ENCODE measurements at regions of chr2 and their contacts with region 1.

Region 1: DNA sequence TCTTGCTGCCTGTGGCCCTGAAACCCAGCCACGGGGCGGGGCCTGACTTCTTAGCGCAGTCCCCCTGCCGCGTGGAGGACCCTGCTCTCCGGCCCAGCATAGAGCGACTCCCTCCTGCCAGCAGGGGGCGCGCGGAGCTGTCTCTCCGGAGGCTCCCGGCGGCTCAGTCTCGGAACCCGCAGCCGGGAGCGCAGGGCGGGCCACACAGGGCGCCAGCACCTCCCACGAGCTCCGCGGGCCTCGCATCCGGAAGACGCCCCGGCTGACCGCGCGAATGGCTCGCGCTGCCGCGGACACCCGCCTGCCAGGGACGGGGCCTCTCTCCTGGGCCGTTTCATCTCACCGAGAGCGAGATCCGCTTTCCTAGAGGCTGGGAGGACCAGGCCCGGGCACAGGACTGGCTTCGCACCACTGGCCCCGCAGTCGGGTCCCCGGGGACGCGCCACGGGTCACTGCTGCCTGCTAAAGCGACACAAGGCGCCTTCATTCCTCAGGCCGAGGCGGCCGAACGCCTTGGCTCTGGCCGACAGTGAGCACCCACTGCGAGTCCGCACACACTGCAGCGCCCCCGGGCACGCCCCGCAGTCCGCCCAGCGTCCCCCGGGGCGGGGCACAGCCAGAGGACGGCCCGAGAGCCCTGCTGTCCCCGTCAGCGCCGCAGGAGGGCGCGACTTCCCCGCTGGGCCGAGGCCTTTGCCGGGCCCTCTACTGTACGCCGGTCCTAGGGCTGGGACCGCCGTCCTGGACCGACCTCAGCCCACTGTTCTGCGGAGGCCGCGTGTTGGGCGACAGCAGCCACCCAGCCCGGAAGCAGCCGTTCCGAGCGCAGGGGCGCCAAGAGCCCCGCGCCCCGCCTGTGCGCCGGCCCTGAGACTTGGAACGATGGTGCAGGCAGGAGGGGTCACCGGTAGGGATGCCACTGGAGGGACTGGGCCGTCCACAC is 39.0 kb upstream of the ARHGEF4 start:
- DNase-seq: peak; percentile 85 to 92 (median 86)
- H3K4me3 ChIP-seq: peak overlapping the region; percentile 92
- H3K4me3 Mint-ChIP-seq: peak overlapping the region; percentile 51 to 92 (median 71)
- H3K27ac ChIP-seq: peak overlapping the region; percentile 84
- H3K27ac Mint-ChIP-seq: peak overlapping the region in 7 of 8 donors; percentile 29 to 78 (median 58)
- H3K4me1 ChIP-seq: peaks cover 4% of the 10 kb centered on the region
- H3K4me1 Mint-ChIP-seq: peaks cover 4 to 8% (median 6%) of the 10 kb centered on the region in 3 donors
- H3K27me3 ChIP-seq: no peaks in the 10 kb centered on the region
- H3K27me3 Mint-ChIP-seq: peaks cover 5% of the 10 kb centered on the region in 2 donors

Region 2: DNA sequence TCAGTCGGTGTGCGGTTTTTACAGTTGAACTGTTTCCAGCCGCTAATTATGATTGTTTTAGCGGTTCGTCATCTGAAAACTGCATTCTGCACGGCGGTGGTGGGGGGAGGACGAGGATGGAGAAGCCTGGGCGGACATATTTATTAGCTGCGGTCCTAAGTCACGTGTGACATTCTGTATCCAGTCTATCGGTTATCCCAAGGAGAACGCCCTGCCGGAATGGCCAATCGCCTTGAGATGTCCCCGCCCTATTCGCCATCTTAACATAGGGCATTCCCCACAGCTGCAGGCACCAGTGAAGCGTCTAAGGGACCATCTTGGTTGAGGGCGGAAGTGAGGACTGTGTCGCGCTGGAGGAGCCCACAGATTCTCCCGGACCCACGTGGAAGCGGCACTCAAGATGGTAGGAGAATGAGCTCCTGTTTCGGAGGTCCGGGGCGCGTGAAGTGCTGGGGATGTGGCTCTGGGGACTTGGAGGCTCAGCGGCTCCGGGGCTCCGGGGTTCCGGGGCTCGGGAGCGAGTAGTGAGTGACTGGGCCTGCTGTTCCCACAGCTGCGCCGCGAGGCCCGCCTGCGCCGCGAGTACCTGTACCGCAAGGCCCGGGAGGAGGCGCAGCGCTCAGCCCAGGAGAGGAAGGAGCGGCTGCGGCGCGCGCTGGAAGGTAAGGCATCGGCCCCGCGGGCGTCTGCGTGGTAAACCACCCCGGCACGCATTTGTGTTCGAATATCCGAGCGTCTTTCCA is 455.1 kb before region 1 on chr2 and contains the start of gene IMP4:
- CTCF ChIA-PET with region 1: interaction called, 4 read pairs
- POLR2A ChIA-PET with region 1: interaction called, 10 read pairs
- DNase-seq: peak; percentile 89 to 98 (median 96)
- H3K4me3 ChIP-seq: peak within 1 kb of the TSS; percentile 90
- H3K4me3 Mint-ChIP-seq: peak within 1 kb of the TSS; percentile 96 to 100 (median 99)
- H3K27ac ChIP-seq: peak within 1 kb of the TSS; percentile 95
- H3K27ac Mint-ChIP-seq: peak within 1 kb of the TSS; percentile 93 to 100 (median 98)
- H3K4me1 ChIP-seq: peaks cover 25% of the 10 kb centered on the region
- H3K4me1 Mint-ChIP-seq: peaks cover 38 to 55% (median 49%) of the 10 kb centered on the region in 3 donors
- H3K27me3 ChIP-seq: no peaks in the 10 kb centered on the region
- H3K27me3 Mint-ChIP-seq: no peaks in the 10 kb centered on the region
- total RNA-seq, gene IMP4: 227 to 239 TPM

Region 3: DNA sequence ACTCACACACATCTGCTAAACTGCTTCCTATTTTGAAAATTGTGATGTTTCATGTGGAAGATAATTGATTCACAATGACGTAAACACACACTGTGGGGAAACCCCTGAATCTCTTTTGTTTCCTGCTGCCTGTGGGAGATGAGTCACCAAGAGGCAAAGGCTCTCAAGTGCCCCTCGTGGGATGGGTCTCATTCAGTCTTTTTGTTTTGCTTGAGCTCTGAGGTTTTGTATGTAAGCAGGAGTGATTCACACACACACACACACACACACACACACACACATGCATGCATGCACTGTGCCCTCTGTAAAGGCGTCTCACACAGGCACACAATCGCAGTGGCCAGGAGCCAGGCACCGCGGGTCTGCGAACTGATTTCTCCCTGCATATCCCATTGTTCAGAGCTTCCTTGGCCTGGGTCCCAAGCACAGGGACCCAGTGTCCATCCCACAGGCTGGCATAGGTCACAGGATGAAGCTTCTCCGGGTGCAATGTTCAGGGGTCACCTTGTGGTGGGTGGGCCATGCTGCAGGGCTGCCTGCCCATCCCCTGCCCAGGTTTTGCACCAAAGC is 26.8 kb after region 1 on chr2:
- CTCF ChIA-PET with region 1: interaction called, 14 read pairs
- POLR2A ChIA-PET with region 1: interaction called, 9 read pairs
- DNase-seq: peak; percentile 40 to 88 (median 64)
- H3K4me3 ChIP-seq: no peak overlapping the region
- H3K4me3 Mint-ChIP-seq: peak overlapping the region in 6 of 7 donors; percentile 37 to 69 (median 59)
- H3K27ac ChIP-seq: no peak overlapping the region
- H3K27ac Mint-ChIP-seq: peak overlapping the region; percentile 72 to 96 (median 88)
- H3K4me1 ChIP-seq: peaks cover 17% of the 10 kb centered on the region
- H3K4me1 Mint-ChIP-seq: peaks cover 10 to 22% (median 18%) of the 10 kb centered on the region in 3 donors
- H3K27me3 ChIP-seq: no peaks in the 10 kb centered on the region
- H3K27me3 Mint-ChIP-seq: peaks cover 0 to 5% of the 10 kb centered on the region in 2 donors

Region 4: DNA sequence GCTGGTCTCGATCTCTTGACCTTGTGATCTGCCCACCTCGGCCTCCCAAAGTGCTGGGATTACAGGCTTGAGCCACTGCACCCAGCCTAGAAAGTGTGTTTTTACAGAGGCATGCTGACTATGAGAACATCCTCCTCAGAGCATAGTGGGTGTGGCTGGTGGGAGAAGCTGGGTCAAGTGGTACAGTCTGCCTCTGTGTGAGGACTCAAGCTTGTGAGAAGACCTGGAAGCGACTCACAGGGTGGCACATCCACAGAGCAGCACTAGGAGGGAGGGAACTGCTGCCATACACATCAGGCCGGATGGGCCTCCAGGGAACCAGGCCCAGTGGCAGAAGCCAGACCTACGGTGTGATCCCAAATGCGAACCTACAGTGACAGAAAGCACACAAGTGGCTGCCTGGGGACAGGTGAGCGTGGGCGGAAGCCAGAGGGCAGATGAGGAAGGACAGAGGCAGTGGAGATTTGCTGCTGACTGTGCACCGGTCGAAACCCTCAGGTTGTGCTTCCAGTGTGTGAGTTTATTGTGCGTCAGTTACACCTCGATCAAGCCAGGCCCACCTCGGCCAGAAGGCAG is 47.8 kb after region 1 on chr2:
- CTCF ChIA-PET with region 1: interaction called, 17 read pairs
- POLR2A ChIA-PET with region 1: no interaction called
- DNase-seq: no peak
- H3K4me3 ChIP-seq: no peak overlapping the region
- H3K4me3 Mint-ChIP-seq: no peak overlapping the region
- H3K27ac ChIP-seq: no peak overlapping the region
- H3K27ac Mint-ChIP-seq: no peak overlapping the region
- H3K4me1 ChIP-seq: no peaks in the 10 kb centered on the region
- H3K4me1 Mint-ChIP-seq: no peaks in the 10 kb centered on the region
- H3K27me3 ChIP-seq: no peaks in the 10 kb centered on the region
- H3K27me3 Mint-ChIP-seq: peaks cover 2 to 16% of the 10 kb centered on the region in 2 donors

Region 5: DNA sequence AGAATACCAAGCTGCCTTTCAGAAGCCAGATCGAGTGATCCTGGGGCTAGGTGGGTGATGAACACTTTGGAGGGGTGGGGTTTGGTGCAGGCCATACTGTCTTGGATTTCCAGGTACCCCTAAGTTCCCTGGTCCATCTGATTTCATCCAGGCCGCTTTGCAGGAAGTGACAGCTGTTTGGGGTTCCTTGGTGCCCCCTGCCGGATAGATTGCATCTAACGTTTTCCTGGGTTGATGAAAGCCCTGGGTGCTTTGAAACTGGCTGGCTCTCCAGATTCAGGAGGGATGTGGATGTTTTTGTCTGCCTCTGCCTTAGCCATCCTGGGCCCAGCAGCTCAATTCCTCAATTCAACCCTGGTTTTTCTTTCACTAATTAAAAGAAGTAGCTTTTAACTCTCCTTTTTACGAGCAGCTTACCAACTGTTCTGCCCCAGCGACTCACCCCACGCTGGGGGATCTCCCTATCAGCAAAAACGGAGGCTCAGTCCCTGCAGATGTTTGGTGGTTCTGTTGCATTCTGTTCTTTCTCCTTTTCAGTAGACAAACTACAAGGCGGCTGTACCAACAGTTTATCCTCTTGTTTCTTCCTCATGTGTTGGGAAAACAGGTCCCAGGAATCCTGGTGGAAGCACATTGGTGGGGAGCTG is 76.1 kb after region 1 on chr2:
- CTCF ChIA-PET with region 1: interaction called, 195 read pairs
- POLR2A ChIA-PET with region 1: interaction called, 6 read pairs
- DNase-seq: peak; percentile 48 to 78 (median 53)
- H3K4me3 ChIP-seq: no peak overlapping the region
- H3K4me3 Mint-ChIP-seq: no peak overlapping the region
- H3K27ac ChIP-seq: no peak overlapping the region
- H3K27ac Mint-ChIP-seq: no peak overlapping the region
- H3K4me1 ChIP-seq: no peaks in the 10 kb centered on the region
- H3K4me1 Mint-ChIP-seq: no peaks in the 10 kb centered on the region
- H3K27me3 ChIP-seq: no peaks in the 10 kb centered on the region
- H3K27me3 Mint-ChIP-seq: peaks cover 0 to 10% of the 10 kb centered on the region in 2 donors

Region 6: GRCh38 chr2:130878933-130879332 is 81.2 kb after region 1 on chr2:
- CTCF ChIA-PET with region 1: interaction called, 195 read pairs
- POLR2A ChIA-PET with region 1: interaction called, 6 read pairs
- DNase-seq: no peak
- H3K4me3 ChIP-seq: no peak overlapping the region
- H3K4me3 Mint-ChIP-seq: no peak overlapping the region
- H3K27ac ChIP-seq: no peak overlapping the region
- H3K27ac Mint-ChIP-seq: no peak overlapping the region
- H3K4me1 ChIP-seq: no peaks in the 10 kb centered on the region
- H3K4me1 Mint-ChIP-seq: no peaks in the 10 kb centered on the region
- H3K27me3 ChIP-seq: no peaks in the 10 kb centered on the region
- H3K27me3 Mint-ChIP-seq: peaks cover 11 to 16% of the 10 kb centered on the region in 2 donors

Region 7: DNA sequence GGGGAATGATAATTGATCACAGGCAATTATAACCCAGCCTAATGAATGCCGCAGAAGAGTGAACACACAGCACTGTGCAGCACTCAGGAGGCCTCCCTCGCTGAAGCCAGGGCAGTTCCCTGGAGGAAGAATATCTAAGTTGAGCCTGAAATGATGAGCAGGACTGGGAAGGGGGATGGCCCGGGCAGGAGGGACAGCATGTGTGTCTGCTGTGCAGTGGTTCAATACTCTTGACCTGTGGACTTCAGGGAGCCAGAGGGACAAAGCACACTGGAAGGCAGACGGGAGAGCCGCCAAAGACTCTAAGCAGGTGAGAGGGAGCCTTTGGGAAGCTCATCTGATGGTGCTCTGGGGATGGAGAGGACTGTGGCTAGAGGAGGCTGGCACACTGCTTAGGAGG is 101.5 kb after region 1 on chr2:
- CTCF ChIA-PET with region 1: no interaction called
- POLR2A ChIA-PET with region 1: no interaction called
- DNase-seq: no peak
- H3K4me3 ChIP-seq: no peak overlapping the region
- H3K4me3 Mint-ChIP-seq: no peak overlapping the region
- H3K27ac ChIP-seq: no peak overlapping the region
- H3K27ac Mint-ChIP-seq: peak overlapping the region in 1 of 8 donors; percentile 70
- H3K4me1 ChIP-seq: no peaks in the 10 kb centered on the region
- H3K4me1 Mint-ChIP-seq: no peaks in the 10 kb centered on the region
- H3K27me3 ChIP-seq: no peaks in the 10 kb centered on the region
- H3K27me3 Mint-ChIP-seq: peaks cover 10 to 21% of the 10 kb centered on the region in 2 donors

Region 8: GRCh38 chr2:130917006-130917688 is 119.4 kb after region 1 on chr2:
- CTCF ChIA-PET with region 1: interaction called, 15 read pairs
- POLR2A ChIA-PET with region 1: interaction called, 3 read pairs
- DNase-seq: no peak
- H3K4me3 ChIP-seq: no peak overlapping the region
- H3K4me3 Mint-ChIP-seq: no peak overlapping the region
- H3K27ac ChIP-seq: no peak overlapping the region
- H3K27ac Mint-ChIP-seq: no peak overlapping the region
- H3K4me1 ChIP-seq: no peaks in the 10 kb centered on the region
- H3K4me1 Mint-ChIP-seq: no peaks in the 10 kb centered on the region
- H3K27me3 ChIP-seq: no peaks in the 10 kb centered on the region
- H3K27me3 Mint-ChIP-seq: peaks cover 9 to 23% of the 10 kb centered on the region in 2 donors